ENCODE measurements at regions of chr7 and their contacts with region 1.

Region 1: DNA sequence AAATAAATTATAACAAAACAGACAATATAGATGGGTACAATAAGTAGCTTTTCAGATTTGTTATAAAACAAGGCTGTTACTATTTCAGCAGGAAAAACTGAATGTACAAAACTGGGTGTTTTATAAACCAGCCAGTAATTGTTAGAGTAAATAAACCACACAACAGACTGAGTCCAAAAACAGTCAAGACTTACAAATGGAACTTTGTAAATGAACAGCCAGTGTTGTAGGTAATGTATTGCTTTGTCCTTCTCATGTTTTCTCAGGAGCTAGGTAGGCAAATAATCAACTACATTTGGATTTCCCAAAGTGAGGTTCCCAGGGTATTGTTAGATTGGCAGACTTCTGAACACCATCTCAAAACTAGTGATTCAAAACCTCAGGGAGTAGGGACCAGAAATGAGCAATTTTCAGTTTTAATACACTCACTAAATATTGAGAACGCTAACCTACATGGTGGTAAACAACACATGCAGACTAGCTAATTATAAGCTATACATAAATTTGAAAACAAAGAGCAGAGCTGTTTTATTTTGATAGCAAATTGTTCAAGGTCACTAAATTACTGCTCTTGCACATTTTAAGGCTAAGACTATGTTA is 36.2 kb downstream of the HERPUD2 start:
- DNase-seq: no peak
- ATAC-seq: no peak
- H3K4me3 ChIP-seq: no peak overlapping the region
- H3K27ac ChIP-seq: no peak overlapping the region
- H3K4me1 ChIP-seq: no peaks in the 10 kb centered on the region
- H3K27me3 ChIP-seq: no peaks in the 10 kb centered on the region
- CTCF ChIP-seq: no peak

Region 2: DNA sequence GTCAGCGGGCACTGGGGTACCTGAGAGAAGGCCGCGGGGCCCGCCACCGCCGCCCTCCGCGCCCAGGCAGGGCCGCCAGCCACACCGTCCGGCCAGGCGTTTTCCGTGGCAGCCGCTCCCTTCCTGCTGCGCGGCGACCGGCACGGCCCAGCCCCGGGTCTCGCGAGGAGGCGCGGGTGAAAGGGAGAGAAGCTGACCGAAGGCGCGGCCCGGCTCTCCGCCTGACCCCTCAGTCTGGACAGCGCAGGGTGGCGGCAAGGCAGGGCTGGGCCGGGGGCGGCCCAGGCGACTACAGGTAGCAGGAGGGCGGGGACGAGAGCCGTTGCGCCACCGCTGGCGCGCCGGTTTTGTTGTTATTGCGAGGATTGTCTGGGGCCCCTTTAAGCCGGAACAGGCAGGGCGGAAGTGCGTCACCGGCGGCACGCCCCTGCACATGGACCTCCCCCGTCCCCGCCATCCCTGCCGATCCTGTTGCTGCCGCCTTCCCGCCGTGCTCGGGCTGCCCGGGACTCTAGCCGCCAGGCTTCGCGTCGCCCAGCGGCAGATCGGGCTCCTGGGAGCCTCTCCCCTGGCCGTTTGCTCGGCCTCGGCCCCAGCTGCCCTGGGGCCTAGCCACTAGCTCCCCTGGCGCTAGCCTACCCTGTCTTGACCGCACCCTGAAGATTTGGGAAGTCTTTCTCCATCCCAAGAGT is 36.2 kb after region 1 on chr7 and contains the start of gene HERPUD2:
- intact Hi-C with region 1: no loop called
- DNase-seq: peak; percentile 92 to 96
- ATAC-seq: peak; percentile 96 to 97 (median 97)
- H3K4me3 ChIP-seq: peak within 1 kb of the TSS; percentile 96
- H3K27ac ChIP-seq: peak within 1 kb of the TSS; percentile 96
- H3K4me1 ChIP-seq: peaks cover 32% of the 10 kb centered on the region
- H3K27me3 ChIP-seq: no peaks in the 10 kb centered on the region
- CTCF ChIP-seq: no peak
- total RNA-seq, gene HERPUD2: 12.5 to 21.5 (median 16.4) TPM

Region 3: DNA sequence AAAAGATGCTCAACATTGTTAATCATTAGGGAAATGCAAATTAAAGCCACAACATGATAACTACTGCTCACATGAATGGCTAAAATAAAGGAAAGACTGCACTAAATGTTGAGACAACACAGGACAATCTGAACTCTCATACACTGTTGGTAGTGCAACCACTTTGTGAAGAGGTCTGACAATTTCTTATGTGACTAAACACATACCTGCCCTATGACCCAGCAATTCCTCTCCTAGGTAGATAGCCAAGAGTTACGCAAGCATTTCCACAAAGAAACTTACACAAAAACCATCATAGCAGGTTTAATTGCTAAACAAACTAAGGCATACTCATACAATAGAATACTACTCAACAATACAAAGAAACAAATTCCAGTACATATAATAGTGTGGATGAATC is 78.0 kb after region 1 on chr7:
- intact Hi-C with region 1: no loop called
- DNase-seq: no peak
- ATAC-seq: no peak
- H3K4me3 ChIP-seq: no peak overlapping the region
- H3K27ac ChIP-seq: no peak overlapping the region
- H3K4me1 ChIP-seq: peaks cover 9% of the 10 kb centered on the region
- H3K27me3 ChIP-seq: no peaks in the 10 kb centered on the region
- CTCF ChIP-seq: no peak

Region 4: GRCh38 chr7:35808815-35809214 is 150.1 kb after region 1 on chr7:
- intact Hi-C with region 1: no loop called
- DNase-seq: no peak
- ATAC-seq: no peak
- H3K4me3 ChIP-seq: no peak overlapping the region
- H3K27ac ChIP-seq: no peak overlapping the region
- H3K4me1 ChIP-seq: peaks cover 38% of the 10 kb centered on the region
- H3K27me3 ChIP-seq: no peaks in the 10 kb centered on the region
- CTCF ChIP-seq: no peak

Region 5: GRCh38 chr7:36777062-36777461 is 1118.4 kb after region 1 on chr7:
- intact Hi-C with region 1: loop called in 1 of 2 experiments (anchors 5 kb)
- DNase-seq: no peak
- ATAC-seq: no peak
- H3K4me3 ChIP-seq: no peak overlapping the region
- H3K27ac ChIP-seq: no peak overlapping the region
- H3K4me1 ChIP-seq: no peaks in the 10 kb centered on the region
- H3K27me3 ChIP-seq: no peaks in the 10 kb centered on the region
- CTCF ChIP-seq: no peak

Measured in psoas muscle (tissue), 8 donors.